ENCODE measurements at regions of chr19 and their contacts with region 1.

Region 1: GRCh38 chr19:920051-920864 is 3.1 kb downstream of the KISS1R start:
- DNase-seq: peak; percentile 91
- H3K4me3 ChIP-seq: peak overlapping the region; percentile 30 to 77 (median 45)
- H3K27ac ChIP-seq: peak overlapping the region in 7 of 8 donors; percentile 42 to 85 (median 60)
- H3K4me1 ChIP-seq: peaks cover 28 to 87% (median 71%) of the 10 kb centered on the region in 6 donors
- H3K27me3 ChIP-seq: peaks cover 7 to 57% (median 44%) of the 10 kb centered on the region in 7 donors
- CTCF ChIP-seq: peak in 2 of 11 experiments; percentile 15 to 28
- POLR2A ChIP-seq: no peak

Region 2: DNA sequence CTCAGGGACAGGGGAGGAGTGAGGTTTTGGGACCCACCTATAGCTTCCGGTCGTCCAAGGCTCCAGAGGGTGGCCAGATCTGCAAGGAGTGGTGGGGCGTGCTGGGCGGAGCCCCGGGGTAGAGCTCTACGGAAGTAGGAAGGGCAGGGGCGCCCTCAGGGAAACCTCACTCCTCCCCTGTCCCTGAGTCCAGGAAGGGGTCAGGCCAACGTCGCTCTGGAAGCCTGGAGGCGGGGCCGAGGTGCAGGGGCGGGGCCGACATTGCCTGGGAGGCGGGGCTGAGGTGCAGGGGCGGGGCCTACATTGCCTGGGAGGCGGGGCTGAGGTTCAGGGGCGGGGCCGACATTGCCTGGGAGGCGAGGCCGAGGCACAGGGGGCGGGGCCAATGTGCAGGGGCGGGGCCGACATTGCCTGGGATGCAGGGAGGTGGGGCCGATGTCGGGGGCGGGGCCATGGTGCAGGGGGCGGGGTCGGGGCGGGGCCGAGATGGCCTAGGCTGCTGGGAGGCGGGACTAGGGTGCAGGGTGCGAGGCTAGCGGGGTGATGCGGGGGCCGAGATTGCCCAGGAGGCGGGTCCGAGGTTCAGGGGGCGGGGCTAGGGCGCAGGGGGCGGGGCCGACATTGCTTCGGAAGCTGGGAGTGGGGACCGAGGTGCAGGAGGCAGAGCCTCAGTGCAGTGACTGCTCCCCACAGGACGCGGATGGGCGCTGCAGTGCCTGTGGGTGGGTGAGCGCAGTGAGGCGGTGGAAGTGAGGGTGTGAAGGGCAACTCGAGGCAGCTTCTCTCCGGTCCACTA is 216.4 kb before region 1 on chr19:
- intact Hi-C with region 1: no loop called
- DNase-seq: peak; percentile 92
- H3K4me3 ChIP-seq: peak overlapping the region in 6 of 8 donors; percentile 6 to 59 (median 34)
- H3K27ac ChIP-seq: peak overlapping the region; percentile 36 to 84 (median 73)
- H3K4me1 ChIP-seq: peaks cover 3 to 51% (median 26%) of the 10 kb centered on the region in 6 donors
- H3K27me3 ChIP-seq: peaks cover 0 to 79% (median 6%) of the 10 kb centered on the region in 7 donors
- CTCF ChIP-seq: peak in 1 of 11 experiments; percentile 11
- POLR2A ChIP-seq: peak in 1 of 3 donors; percentile 47

Region 3: DNA sequence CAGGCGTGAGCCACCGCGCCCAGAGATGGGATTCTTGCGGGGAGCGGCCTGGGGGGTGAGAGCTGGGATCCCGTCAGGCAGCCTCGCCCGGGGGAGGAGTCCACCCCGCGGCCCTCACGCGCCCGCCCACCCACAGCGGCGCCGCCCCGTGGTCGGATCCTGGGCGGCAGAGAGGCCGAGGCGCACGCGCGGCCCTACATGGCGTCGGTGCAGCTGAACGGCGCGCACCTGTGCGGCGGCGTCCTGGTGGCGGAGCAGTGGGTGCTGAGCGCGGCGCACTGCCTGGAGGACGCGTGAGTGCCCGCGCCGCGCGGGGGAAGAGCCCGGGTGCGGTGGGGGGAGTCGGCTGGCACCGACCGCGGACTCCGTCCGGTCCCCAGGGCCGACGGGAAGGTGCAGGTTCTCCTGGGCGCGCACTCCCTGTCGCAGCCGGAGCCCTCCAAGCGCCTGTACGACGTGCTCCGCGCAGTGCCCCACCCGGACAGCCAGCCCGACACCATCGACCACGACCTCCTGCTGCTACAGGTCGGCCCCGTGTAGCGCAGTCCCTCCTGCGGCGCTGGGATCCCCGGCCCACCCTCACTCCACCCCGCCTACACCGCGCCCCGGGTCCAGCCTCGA is 59.7 kb before region 1 on chr19:
- intact Hi-C with region 1: loop called (anchors 2 kb)
- DNase-seq: peak; percentile 90
- H3K4me3 ChIP-seq: peak overlapping the region in 7 of 8 donors; percentile 27 to 66 (median 42)
- H3K27ac ChIP-seq: peak overlapping the region in 2 of 8 donors; percentile 13 to 60
- H3K4me1 ChIP-seq: peaks cover 11 to 67% (median 48%) of the 10 kb centered on the region in 6 donors
- H3K27me3 ChIP-seq: peaks cover 0 to 63% (median 20%) of the 10 kb centered on the region in 7 donors
- CTCF ChIP-seq: peak in 8 of 11 experiments; percentile 9 to 45 (median 28)
- POLR2A ChIP-seq: no peak

Region 4: GRCh38 chr19:1064661-1065605 is 144.7 kb after region 1 on chr19:
- intact Hi-C with region 1: no loop called
- DNase-seq: peak; percentile 94
- H3K4me3 ChIP-seq: peak overlapping the region in 2 of 8 donors; percentile 2 to 88
- H3K27ac ChIP-seq: peak overlapping the region in 6 of 8 donors; percentile 34 to 98 (median 79)
- H3K4me1 ChIP-seq: peaks cover 37 to 68% (median 59%) of the 10 kb centered on the region in 6 donors
- H3K27me3 ChIP-seq: peaks cover 0 to 10% (median 0%) of the 10 kb centered on the region in 7 donors
- CTCF ChIP-seq: peak; percentile 82 to 98 (median 94)
- POLR2A ChIP-seq: no peak

Region 5: DNA sequence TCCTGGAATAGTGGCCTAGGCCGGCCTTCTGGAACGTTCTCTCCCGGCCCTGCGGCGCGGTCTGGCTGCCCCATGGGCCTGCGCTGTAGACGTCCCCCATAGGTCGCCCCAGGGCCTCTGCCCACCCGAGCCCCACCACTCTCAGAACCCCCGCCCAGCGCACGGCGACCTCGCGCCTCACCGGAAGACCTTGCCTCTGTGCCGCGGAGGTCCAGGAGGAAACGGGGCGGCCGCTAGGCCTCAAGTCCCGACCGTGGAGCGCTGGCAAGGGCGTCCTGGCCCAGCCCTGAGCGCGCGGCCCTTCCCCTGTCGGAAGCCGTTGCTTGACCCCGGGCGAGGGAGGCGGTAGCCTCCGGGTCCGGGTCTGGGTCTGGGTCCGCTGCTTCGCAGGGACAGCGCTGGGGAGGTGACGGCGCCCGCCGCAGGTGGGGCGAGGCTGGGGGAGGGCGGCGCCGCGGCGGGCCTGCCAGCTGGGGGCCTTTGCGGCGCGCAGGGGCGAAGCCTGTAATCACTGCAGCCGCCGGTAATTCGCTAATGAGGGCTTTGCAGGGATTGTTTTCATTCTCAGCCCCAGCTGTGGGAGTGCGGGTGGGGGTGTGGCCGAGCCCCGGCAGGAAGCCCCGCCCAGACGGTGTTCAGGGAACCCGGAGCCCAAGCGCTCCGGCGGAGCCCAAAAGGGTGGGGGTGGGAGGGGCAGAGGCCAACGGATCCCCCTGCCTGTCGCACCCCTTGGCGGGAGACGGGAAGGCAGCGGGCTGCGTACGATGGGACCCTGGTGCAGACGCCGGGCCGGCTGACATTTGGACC is 550.1 kb after region 1 on chr19:
- intact Hi-C with region 1: no loop called
- DNase-seq: peak; percentile 90
- H3K4me3 ChIP-seq: peak overlapping the region; percentile 33 to 72 (median 46)
- H3K27ac ChIP-seq: peak overlapping the region in 1 of 8 donors; percentile 3
- H3K4me1 ChIP-seq: peaks cover 50 to 97% (median 72%) of the 10 kb centered on the region in 6 donors
- H3K27me3 ChIP-seq: peaks cover 21 to 88% (median 75%) of the 10 kb centered on the region in 7 donors
- CTCF ChIP-seq: no peak
- POLR2A ChIP-seq: no peak

Measured in spleen (tissue), 13 donors.